Adrenal gland (tissue), 19 donors: ENCODE measurements at regions of chr6 and their contacts with region 1.

Region 1: GRCh38 chr6:32984605-32985389 is 16.4 kb downstream of the BRD2 start:
- DNase-seq: peak; percentile 87 to 98 (median 95)
- H3K4me3 ChIP-seq: no peak overlapping the region
- H3K27ac ChIP-seq: peak overlapping the region in 1 of 5 donors; percentile 24
- H3K4me1 ChIP-seq: peaks cover 0 to 10% of the 10 kb centered on the region in 2 donors
- H3K27me3 ChIP-seq: no peaks in the 10 kb centered on the region
- CTCF ChIP-seq: peak; percentile 83 to 93 (median 88)
- POLR2A ChIP-seq: no peak

Region 2: DNA sequence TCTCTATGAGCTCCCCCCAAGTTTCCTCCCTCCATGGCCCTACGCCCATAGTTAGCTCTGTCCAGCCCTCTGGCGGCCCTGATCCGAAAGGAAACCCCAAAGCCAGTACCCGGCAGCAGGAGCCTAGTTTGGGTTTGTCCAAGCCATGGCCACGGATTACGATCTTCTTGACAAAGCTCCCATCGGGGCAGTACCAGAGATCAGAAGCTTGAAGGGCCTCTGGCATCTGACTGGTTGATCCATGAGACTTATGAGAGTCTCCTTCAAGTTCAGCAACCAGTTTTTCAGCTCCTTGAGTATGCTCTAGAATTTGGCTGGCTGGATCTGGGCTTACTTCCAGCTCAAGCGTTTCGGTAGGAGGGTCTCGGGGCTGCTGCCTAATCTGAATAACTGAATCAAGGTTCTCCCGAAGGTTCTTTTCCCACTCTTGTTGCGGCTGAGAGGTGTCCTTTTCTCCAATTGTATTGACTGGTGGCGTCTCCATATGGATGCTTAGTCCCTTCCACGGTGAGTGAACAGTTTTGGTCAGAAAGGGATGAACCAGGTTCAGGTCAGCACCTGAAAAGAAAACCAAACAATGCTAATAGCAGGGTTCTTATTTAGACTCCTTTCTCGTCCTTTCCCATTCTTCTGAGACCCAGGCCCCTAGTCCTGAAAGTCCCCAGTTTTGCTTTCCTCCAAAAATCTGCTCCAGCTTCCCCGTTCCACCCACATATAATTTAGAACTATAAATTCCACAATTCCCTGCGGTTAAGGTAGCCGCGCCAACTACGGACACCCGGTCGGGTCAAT is 855.3 kb before region 1 on chr6:
- intact Hi-C with region 1: no loop called
- DNase-seq: no peak
- H3K4me3 ChIP-seq: peak overlapping the region; percentile 37 to 93 (median 78)
- H3K27ac ChIP-seq: peak overlapping the region; percentile 53 to 95 (median 92)
- H3K4me1 ChIP-seq: peaks cover 20 to 29% of the 10 kb centered on the region in 2 donors
- H3K27me3 ChIP-seq: no peaks in the 10 kb centered on the region
- CTCF ChIP-seq: no peak
- POLR2A ChIP-seq: no peak

Region 3: DNA sequence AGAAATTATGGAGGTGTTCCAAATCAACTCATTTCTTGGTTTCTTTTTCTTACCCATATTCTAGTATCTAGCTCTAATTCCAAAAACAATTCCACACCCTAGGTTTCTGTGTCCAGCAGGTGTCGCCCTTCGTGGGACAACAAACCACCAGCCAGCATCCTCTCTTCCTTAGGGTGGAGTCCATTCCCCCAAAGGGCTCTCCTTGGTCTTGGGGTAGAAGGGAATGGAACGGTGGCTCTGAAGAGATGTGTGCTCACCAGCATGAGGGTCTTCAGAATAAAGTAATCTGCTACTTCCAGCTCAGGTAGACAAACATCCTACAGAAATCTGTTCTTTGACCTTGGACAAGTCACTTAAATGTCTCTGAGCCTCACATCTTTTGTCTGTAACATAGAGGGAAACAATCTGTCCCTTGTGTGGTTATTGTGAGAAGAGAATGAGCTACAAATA is 51.1 kb before region 1 on chr6:
- intact Hi-C with region 1: loop called (anchors 2 to 5 kb)
- DNase-seq: peak; percentile 69 to 94 (median 79)
- H3K4me3 ChIP-seq: no peak overlapping the region
- H3K27ac ChIP-seq: peak overlapping the region in 1 of 5 donors; percentile 24
- H3K4me1 ChIP-seq: peaks cover 0 to 10% of the 10 kb centered on the region in 2 donors
- H3K27me3 ChIP-seq: no peaks in the 10 kb centered on the region
- CTCF ChIP-seq: peak; percentile 66 to 81 (median 76)
- POLR2A ChIP-seq: no peak